Cardiac septum (tissue), 1 donor: ENCODE measurements at regions of chr3 and their contacts with region 1.

Region 1: DNA sequence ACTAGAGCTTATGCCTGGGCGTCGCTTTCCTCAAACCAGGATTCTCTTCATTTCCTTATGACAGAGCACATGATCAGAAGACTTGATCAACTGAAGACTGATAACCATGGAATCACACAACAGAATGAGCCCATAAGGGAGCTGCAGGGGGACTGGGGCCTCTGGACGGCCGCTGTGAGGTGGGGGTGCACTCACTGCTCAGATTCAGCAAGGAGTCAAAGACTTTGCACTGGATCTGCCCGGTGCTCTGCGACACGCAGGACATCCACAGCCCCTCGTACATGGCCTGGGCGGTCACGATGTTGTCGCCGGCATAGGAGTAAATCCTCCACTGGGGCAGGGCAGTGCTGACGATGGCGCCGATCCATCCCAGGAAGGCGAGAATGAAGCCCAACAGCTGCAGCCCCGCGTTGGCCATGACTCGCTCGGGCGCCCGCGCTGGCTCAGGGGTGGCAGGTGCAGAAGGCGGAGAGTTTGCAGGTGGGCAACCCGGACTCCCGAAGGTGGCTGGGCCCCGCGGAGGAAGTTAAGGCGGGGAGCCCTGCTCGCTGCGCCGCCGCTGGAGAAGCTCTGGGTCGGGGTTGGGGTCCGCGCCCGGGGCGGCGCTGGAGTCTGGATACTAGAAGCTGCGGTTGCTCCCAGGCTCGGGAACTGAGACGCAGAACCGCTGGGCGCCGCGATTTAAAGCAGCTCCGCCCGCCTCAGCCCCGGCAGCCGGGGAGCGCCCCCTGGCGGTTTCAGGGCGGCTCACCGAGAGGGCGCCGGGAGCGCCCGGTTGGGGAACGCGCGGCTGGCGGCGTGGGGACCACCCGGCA is at the start of gene CLDN1:
- DNase-seq: peak; percentile 82
- total RNA-seq, gene CLDN1: 0.57 TPM

Region 2: GRCh38 chr3:189961525-189962161 is 360.4 kb before region 1 on chr3:
- intact Hi-C with region 1: loop called (anchors 5 kb)
- DNase-seq: no peak

Region 3: DNA sequence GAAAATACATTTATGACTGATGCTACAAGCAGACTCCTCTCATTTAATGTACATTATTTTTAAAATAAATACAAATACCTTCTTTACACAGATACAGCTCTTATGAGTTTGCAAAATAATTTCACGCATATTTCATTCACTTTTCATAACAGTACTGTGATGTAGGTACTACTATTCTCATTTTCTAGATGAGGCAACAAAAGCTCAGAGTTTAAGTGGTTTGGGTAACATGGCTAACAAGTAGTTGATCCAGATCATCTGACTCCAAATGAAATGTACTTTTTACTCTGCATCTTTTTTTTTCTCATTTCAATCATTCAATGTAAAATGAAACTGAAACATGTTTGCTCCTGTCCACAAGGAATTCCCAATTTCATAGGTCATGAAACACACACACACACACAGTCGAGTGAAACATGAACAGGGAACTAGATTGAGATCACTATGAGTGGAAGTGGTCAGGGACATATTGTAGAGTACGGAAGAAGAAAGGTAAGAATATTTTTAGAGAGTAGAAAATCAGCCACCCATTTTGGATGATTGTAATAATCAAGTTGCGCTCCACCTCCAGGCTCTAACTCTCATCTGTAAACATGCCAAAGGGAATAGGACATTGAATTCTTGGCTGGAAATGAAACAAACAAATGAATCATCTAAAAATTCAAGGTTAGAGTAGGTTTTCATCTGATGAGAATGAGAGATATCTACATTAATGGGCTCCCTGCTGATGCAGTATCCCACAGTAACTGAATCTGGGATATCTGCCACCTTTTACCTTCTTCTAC is 92.2 kb before region 1 on chr3:
- intact Hi-C with region 1: loop called (anchors 5 kb)
- DNase-seq: no peak

Region 4: DNA sequence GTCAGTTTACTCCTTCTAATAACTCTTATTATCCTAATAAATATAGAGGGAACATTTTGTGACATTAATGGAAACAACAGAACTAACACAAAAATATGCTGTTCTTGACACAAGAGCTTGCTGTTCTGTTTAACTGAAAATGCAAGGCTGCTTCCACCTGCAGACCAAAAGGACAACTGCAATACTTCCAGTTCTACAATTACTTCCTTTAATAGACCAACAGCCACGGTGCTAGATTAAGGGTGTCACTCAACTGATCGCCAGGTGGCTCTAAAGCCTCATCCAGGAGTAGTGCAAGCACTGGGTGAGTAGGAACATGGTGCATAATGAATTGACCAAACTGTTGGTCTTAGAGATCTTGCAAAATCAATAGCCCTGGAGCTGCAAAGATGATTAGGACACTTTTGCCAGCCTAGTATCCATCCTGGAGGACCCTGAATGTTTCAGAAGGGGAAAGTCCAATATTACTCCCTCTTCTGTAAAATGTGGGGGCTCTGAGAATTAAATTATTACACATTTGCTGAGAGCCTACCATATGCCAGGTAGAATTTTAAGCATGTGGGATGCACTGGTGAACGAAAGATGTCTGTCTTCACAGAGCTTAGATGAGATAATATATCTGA is 62.4 kb after region 1 on chr3:
- intact Hi-C with region 1: loop called (anchors 5 kb)
- DNase-seq: no peak

Region 5: GRCh38 chr3:190424478-190425439 is 102.8 kb after region 1 on chr3:
- intact Hi-C with region 1: loop called (anchors 10 kb)
- DNase-seq: no peak